Right ventricle myocardium inferior (tissue), 1 donor: ENCODE measurements at regions of chr15 and their contacts with region 1.

Region 1: GRCh38 chr15:64067564-64068030 is 21.3 kb upstream of the DAPK2 start:
- DNase-seq: no peak
- ATAC-seq: peak; percentile 71

Region 2: GRCh38 chr15:63610200-63610841 is 457.3 kb before region 1 on chr15:
- intact Hi-C with region 1: loop called (anchors 5 kb)
- DNase-seq: no peak
- ATAC-seq: peak; percentile 59